ENCODE measurements at regions of chr1 and their contacts with region 1.

Region 1: DNA sequence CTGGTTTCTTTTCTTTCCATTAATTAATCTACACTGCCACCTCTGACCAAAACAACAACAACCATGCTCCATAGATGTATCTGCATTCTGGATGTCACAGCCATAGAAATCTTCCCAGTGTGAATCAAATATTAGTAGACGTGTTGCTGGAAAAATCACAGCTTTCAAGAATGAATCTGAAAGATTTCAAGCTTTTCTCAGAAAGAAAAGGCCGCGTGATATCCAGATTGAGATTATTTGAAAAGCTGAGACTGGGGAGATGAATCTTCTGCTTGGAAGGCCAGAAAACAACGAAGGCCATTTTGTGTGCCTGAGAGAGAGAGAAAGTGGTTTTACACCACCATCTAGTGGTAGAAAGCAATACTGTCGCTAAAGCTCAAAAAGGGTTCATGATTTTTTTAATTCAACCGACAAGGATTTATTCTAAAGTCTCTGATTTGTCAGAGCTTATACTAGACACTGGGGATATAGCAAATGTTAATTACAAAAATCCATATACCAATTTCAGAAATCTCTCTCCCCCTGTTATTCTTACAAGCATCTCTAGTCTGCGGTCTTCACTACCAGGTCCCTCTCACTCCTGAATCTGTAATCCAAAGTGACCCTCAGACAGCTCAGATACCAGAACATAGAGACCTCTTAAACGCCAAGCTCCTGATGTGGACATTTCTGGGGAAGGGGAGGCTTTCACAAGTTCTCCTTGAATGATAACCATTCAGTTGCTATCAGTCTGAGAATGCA is 87.5 kb upstream of the SGIP1 start:
- DNase-seq: peak; percentile 82
- H3K4me3 ChIP-seq: no peak overlapping the region
- H3K27ac ChIP-seq: no peak overlapping the region
- H3K4me1 ChIP-seq: peaks cover 21% of the 10 kb centered on the region
- H3K27me3 ChIP-seq: no peaks in the 10 kb centered on the region
- CTCF ChIP-seq: peak; percentile 81

Region 2: GRCh38 chr1:65687428-65688214 is 758.8 kb before region 1 on chr1:
- CTCF ChIA-PET with region 1: interaction called, 3 read pairs
- POLR2A ChIA-PET with region 1: no interaction called
- intact Hi-C with region 1: loop called (anchors 5 kb)
- DNase-seq: peak; percentile 81
- H3K4me3 ChIP-seq: no peak overlapping the region
- H3K27ac ChIP-seq: no peak overlapping the region
- H3K4me1 ChIP-seq: peaks cover 4% of the 10 kb centered on the region
- H3K27me3 ChIP-seq: no peaks in the 10 kb centered on the region
- CTCF ChIP-seq: peak; percentile 91

Region 3: DNA sequence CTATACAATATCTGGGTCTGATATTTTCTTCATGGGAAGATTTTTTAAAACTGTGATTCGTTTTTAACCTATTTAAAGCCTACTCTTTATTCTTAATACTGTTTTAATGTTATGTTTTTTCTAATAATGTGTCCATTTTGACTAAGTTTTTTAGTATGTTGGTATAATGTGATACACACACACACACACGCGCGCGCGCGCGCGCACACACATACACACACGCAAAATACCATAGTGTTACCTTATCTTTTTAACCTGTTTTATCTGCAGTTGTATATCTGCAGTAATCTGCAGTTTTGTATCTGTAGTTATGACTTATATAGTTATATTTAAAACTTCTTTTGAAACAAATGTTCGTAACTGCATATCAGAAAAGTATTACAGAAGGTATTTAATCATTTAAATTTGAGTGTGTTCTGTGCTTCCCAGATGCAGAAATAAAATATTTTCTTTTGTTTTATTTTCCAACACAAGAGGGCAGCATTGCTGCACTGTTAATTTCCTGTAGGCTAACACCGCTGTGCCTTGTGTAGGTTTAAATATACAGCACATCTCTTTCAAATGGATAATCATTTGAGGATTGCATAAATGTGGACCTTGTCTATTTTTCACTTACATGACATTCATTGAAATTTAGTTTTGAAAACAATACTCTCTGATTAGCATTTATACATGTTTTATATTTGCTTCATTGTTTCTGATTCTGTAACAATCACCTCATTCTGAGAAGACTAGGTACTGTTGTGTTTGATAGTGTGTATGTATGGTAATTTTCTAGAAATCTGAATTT is 487.7 kb before region 1 on chr1:
- CTCF ChIA-PET with region 1: interaction called, 3 read pairs
- POLR2A ChIA-PET with region 1: no interaction called
- intact Hi-C with region 1: loop called (anchors 2 kb)
- DNase-seq: peak; percentile 75
- H3K4me3 ChIP-seq: no peak overlapping the region
- H3K27ac ChIP-seq: no peak overlapping the region
- H3K4me1 ChIP-seq: no peaks in the 10 kb centered on the region
- H3K27me3 ChIP-seq: no peaks in the 10 kb centered on the region
- CTCF ChIP-seq: peak; percentile 75

Region 4: GRCh38 chr1:66253330-66253921 is 193.0 kb before region 1 on chr1:
- CTCF ChIA-PET with region 1: interaction called, 12 read pairs
- POLR2A ChIA-PET with region 1: interaction called, 3 read pairs
- intact Hi-C with region 1: loop called (anchors 1 kb)
- DNase-seq: peak; percentile 82
- H3K4me3 ChIP-seq: no peak overlapping the region
- H3K27ac ChIP-seq: no peak overlapping the region
- H3K4me1 ChIP-seq: peaks cover 42% of the 10 kb centered on the region
- H3K27me3 ChIP-seq: no peaks in the 10 kb centered on the region
- CTCF ChIP-seq: peak; percentile 81

Region 5: GRCh38 chr1:66331657-66332547 is 114.5 kb before region 1 on chr1:
- CTCF ChIA-PET with region 1: interaction called, 3 read pairs
- POLR2A ChIA-PET with region 1: no interaction called
- intact Hi-C with region 1: loop called (anchors 10 kb)
- DNase-seq: peak; percentile 89
- H3K4me3 ChIP-seq: peak overlapping the region; percentile 54
- H3K27ac ChIP-seq: peak overlapping the region; percentile 84
- H3K4me1 ChIP-seq: peaks cover 50% of the 10 kb centered on the region
- H3K27me3 ChIP-seq: no peaks in the 10 kb centered on the region
- CTCF ChIP-seq: 0 out of 2 replicates have a peak, but pooled peaks have one; percentile 21

Region 6: DNA sequence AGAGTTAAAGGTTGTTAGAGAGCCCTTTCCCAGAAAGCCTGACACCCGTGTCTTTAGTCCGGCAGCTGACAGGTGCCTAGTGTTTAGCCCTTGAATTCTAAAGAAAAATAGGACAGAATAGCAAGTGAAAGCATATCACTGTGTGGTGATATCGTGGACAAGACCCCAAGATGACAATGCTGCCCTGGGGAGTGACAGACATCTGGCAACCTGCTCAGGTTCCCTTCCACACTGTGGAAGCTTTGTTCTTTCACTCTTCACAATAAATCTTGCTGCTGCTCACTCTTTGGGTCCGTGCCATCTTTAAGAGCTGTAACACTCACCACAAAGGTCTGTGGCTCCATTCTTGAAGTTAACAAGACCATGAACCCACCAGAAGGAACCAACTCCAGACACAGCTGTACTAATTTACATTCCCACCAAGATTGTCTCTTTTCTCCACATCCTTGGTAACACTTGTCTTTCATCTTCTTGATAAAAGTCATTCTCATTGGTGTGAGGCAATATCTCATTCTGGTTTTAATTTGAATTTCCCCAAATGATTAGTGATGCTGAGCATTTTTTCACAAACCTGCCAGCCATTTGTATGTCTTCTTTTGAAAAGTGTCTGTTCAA is 20.1 kb before region 1 on chr1:
- CTCF ChIA-PET with region 1: no interaction called
- POLR2A ChIA-PET with region 1: no interaction called
- intact Hi-C with region 1: no loop called
- DNase-seq: no peak
- H3K4me3 ChIP-seq: no peak overlapping the region
- H3K27ac ChIP-seq: no peak overlapping the region
- H3K4me1 ChIP-seq: no peaks in the 10 kb centered on the region
- H3K27me3 ChIP-seq: no peaks in the 10 kb centered on the region
- CTCF ChIP-seq: no peak

Region 7: GRCh38 chr1:66464802-66465201 is 18.4 kb after region 1 on chr1:
- CTCF ChIA-PET with region 1: no interaction called
- POLR2A ChIA-PET with region 1: no interaction called
- intact Hi-C with region 1: no loop called
- DNase-seq: no peak
- H3K4me3 ChIP-seq: no peak overlapping the region
- H3K27ac ChIP-seq: no peak overlapping the region
- H3K4me1 ChIP-seq: no peaks in the 10 kb centered on the region
- H3K27me3 ChIP-seq: no peaks in the 10 kb centered on the region
- CTCF ChIP-seq: no peak

Region 8: DNA sequence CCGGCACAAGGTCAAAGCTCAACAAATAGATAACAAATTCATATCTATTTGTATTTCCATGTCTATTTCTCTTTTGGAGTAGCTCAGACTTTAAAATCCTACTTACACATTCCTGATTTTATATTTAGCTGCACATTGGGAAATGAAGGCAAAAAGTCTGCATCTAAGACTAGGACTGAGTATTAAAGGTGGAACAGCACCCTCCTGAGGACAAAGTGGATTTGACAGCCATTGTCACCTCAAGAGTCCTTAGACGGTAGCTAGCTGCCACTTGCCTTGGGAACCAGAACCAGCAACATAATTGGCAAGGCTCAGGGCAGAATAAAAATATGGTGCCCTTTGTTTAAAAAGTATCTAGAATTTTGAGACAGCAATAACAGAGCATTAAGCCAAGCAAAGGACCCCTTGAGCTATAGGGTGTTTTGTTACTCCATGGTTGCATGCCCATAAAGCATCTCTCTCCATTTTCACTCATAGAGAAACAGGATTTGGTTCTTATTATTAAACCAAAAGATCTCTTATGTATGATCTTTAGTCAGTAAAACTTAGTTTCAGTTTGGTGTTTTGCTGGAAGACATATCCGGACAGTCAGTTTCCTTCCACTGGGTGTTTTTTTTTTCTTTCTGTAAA is 57.5 kb after region 1 on chr1:
- CTCF ChIA-PET with region 1: interaction called, 10 read pairs
- POLR2A ChIA-PET with region 1: no interaction called
- intact Hi-C with region 1: loop called (anchors 5 kb)
- DNase-seq: peak; percentile 79
- H3K4me3 ChIP-seq: no peak overlapping the region
- H3K27ac ChIP-seq: no peak overlapping the region
- H3K4me1 ChIP-seq: peaks cover 10% of the 10 kb centered on the region
- H3K27me3 ChIP-seq: no peaks in the 10 kb centered on the region
- CTCF ChIP-seq: peak; percentile 87

Region 9: GRCh38 chr1:66725885-66726665 is 279.6 kb after region 1 on chr1:
- CTCF ChIA-PET with region 1: no interaction called
- POLR2A ChIA-PET with region 1: no interaction called
- intact Hi-C with region 1: loop called (anchors 2 kb)
- DNase-seq: peak; percentile 89
- H3K4me3 ChIP-seq: no peak overlapping the region
- H3K27ac ChIP-seq: no peak overlapping the region
- H3K4me1 ChIP-seq: peaks cover 19% of the 10 kb centered on the region
- H3K27me3 ChIP-seq: no peaks in the 10 kb centered on the region
- CTCF ChIP-seq: peak; percentile 97

Region 10: GRCh38 chr1:66788231-66788939 is 342.0 kb after region 1 on chr1:
- CTCF ChIA-PET with region 1: no interaction called
- POLR2A ChIA-PET with region 1: no interaction called
- intact Hi-C with region 1: no loop called
- DNase-seq: no peak
- H3K4me3 ChIP-seq: no peak overlapping the region
- H3K27ac ChIP-seq: no peak overlapping the region
- H3K4me1 ChIP-seq: no peaks in the 10 kb centered on the region
- H3K27me3 ChIP-seq: no peaks in the 10 kb centered on the region
- CTCF ChIP-seq: no peak

Region 11: DNA sequence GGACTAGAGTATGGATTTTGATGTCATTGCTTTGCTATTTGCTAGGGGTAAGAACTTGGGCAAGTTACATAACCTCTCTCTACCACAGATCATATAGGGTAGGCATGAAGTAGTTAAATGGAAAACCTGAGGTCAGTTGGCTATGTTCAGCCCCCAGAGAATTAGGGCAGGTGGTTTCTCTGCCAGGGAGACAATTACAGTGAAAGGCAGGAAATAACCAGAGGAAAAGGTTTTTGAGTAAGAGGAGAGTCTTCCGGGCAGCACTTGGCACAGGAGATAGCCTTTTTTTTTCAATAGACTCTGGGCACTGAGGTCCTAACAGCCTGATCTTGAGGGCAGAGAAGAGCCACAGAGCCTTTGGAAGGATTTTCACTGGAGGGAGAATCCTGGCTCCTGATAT is 1000.5 kb after region 1 on chr1:
- CTCF ChIA-PET with region 1: no interaction called
- POLR2A ChIA-PET with region 1: no interaction called
- intact Hi-C with region 1: no loop called
- DNase-seq: no peak
- H3K4me3 ChIP-seq: no peak overlapping the region
- H3K27ac ChIP-seq: no peak overlapping the region
- H3K4me1 ChIP-seq: no peaks in the 10 kb centered on the region
- H3K27me3 ChIP-seq: no peaks in the 10 kb centered on the region
- CTCF ChIP-seq: no peak

Measured in A673 (cell line).